ENCODE measurements at regions of chr9 and their contacts with region 1.

Region 1: GRCh38 chr9:27749838-27750237 is 176.6 kb upstream of the C9orf72 start:
- DNase-seq: no peak
- H3K4me3 ChIP-seq: no peak overlapping the region
- H3K27ac ChIP-seq: no peak overlapping the region
- H3K4me1 ChIP-seq: no peaks in the 10 kb centered on the region
- H3K27me3 ChIP-seq: no peaks in the 10 kb centered on the region
- CTCF ChIP-seq: no peak
- EP300 ChIP-seq: no peak
- POLR2A ChIP-seq: no peak

Region 2: DNA sequence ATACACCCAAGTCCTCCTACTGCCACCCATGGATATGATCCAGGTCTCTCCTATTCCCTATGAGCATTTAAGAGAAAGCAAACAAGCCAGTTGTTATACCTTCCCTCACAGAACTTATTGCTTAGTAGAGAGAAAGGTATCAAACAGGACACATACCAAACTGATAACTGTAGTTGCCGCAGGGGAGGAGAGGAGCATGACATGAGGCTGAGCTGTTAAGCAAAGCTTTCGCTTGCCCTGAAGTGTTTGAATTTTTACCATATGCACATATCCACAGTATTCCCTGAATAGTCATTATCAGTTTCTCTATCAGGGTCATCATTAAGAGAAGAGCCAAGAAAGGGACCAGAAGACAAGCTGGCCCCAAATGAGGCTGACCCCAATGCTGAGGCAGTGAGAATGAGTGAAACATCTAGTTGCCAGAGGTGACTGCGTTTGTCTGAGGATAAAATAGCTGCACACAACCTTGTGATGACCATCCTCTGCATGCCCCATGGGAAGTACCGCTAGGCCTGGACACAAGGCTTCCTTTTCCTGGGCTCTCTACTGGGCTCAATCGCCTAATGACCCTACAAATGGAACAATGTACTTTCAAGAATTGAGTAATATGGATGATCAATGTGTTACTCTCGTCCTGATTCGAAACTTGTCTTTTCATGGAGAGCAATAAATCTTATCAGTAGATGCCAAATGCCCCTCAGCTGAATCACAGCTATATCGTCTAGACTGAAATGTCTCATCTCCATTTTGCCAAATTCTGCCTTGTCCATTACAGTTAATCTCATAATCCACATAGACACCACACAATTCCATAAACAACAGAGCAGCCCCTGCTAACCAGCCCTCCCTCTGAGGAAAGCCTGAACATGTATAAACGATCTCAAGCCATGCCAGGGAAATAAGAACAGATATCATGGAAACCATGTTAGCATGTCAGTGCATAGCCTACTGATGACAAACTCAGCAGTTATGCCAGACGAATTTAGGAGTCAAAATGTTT is 230.1 kb before region 1 on chr9:
- in situ Hi-C with region 1: no loop called
- intact Hi-C with region 1: no loop called
- DNase-seq: no peak
- H3K4me3 ChIP-seq: no peak overlapping the region
- H3K27ac ChIP-seq: no peak overlapping the region
- H3K4me1 ChIP-seq: peaks cover 0 to under 1% (median 0%) of the 10 kb centered on the region in 4 donors
- H3K27me3 ChIP-seq: no peaks in the 10 kb centered on the region
- CTCF ChIP-seq: no peak
- EP300 ChIP-seq: no peak
- POLR2A ChIP-seq: no peak

Region 3: GRCh38 chr9:27701587-27701986 is 48.3 kb before region 1 on chr9:
- in situ Hi-C with region 1: no loop called
- intact Hi-C with region 1: no loop called
- DNase-seq: peak; percentile 18
- H3K4me3 ChIP-seq: no peak overlapping the region
- H3K27ac ChIP-seq: peak overlapping the region in 2 of 4 donors; percentile 21 to 35
- H3K4me1 ChIP-seq: peaks cover 0 to 6% (median 0%) of the 10 kb centered on the region in 4 donors
- H3K27me3 ChIP-seq: no peaks in the 10 kb centered on the region
- CTCF ChIP-seq: no peak
- EP300 ChIP-seq: no peak
- POLR2A ChIP-seq: no peak

Region 4: DNA sequence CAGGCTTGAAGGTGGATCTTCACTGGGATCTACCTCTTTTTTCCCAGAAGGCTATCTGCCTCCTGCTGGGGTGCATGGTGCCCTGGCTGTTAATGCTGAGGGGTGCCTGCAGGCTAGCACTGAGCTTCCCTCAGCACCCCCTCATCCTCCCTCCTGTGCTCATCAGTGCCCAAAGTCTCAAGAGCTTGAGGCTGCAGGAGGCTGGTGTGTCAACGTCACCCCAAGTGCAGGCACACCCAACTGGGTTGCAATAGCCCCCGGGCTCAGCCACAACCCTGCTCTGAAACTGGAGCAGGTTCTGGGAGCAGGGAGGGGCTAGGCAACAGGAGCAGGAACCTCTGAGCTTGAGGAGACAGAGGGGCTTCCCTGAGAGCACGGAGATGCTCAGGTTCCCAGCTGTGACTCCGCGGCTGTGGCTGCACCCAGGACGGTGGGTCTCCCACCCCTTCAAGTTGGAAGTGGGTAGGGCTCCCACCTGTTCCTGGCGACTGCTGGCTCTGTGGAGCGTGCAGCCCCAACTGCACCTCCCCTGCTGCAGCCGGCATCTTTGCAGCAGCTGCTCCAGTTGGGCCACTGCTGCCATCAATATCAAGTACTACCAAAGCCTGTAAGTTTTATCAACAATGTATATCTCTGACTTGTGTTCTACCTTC is 1090.1 kb after region 1 on chr9:
- in situ Hi-C with region 1: no loop called
- intact Hi-C with region 1: loop called (anchors 10 kb)
- DNase-seq: no peak
- H3K4me3 ChIP-seq: no peak overlapping the region
- H3K27ac ChIP-seq: no peak overlapping the region
- H3K4me1 ChIP-seq: no peaks in the 10 kb centered on the region
- H3K27me3 ChIP-seq: no peaks in the 10 kb centered on the region
- CTCF ChIP-seq: no peak
- EP300 ChIP-seq: no peak
- POLR2A ChIP-seq: no peak